ENCODE measurements at regions of chr1 and their contacts with region 1.

Region 1: GRCh38 chr1:160862203-160863060 is at the start of gene CD244:
- DNase-seq: peak; percentile 86
- ATAC-seq: peak; percentile 95
- H3K4me3 Mint-ChIP-seq: peak within 1 kb of the TSS; percentile 58
- H3K27ac Mint-ChIP-seq: peak within 1 kb of the TSS; percentile 67
- H3K4me1 Mint-ChIP-seq: peaks cover 32% of the 10 kb centered on the region
- H3K27me3 Mint-ChIP-seq: no peaks in the 10 kb centered on the region
- CTCF ChIP-seq: no peak
- total RNA-seq, gene CD244: 1.4 to 1.8 TPM

Region 2: GRCh38 chr1:160877221-160877620 is 14.8 kb after region 1 on chr1:
- CTCF ChIA-PET with region 1: interaction called, 30 read pairs
- POLR2A ChIA-PET with region 1: interaction called, 3 read pairs
- intact Hi-C with region 1: no loop called
- DNase-seq: peak; percentile 28
- ATAC-seq: peak; percentile 80
- H3K4me3 Mint-ChIP-seq: no peak overlapping the region
- H3K27ac Mint-ChIP-seq: peak overlapping the region; percentile 19
- H3K4me1 Mint-ChIP-seq: peaks cover 30% of the 10 kb centered on the region
- H3K27me3 Mint-ChIP-seq: no peaks in the 10 kb centered on the region
- CTCF ChIP-seq: peak; percentile 60

Measured in activated CD8-positive, alpha-beta T cell treated with anti-CD3 and anti-CD28 coated beads for 36 hours (primary cell).